ENCODE measurements at regions of chr1 and their contacts with region 1.

Region 1: GRCh38 chr1:167066333-167067122 is 23.6 kb downstream of the GPA33 start:
- DNase-seq: peak; percentile 56 to 68
- ATAC-seq: peak; percentile 85 to 96
- H3K4me3 ChIP-seq: peak overlapping the region; percentile 36 to 70 (median 42)
- H3K27ac ChIP-seq: no peak overlapping the region
- H3K4me1 ChIP-seq: peaks cover 0 to 5% of the 10 kb centered on the region in 2 donors
- H3K27me3 ChIP-seq: no peaks in the 10 kb centered on the region
- CTCF ChIP-seq: peak; percentile 93 to 98 (median 96)
- POLR2A ChIP-seq: no peak

Region 2: GRCh38 chr1:167128261-167129227 is 62.0 kb after region 1 on chr1:
- in situ Hi-C with region 1: loop called in 2 of 4 experiments (anchors 5 to 10 kb)
- intact Hi-C with region 1: loop called (anchors 2 kb)
- DNase-seq: no peak
- ATAC-seq: peak in 1 of 2 donors; percentile 46
- H3K4me3 ChIP-seq: no peak overlapping the region
- H3K27ac ChIP-seq: peak overlapping the region in 3 of 4 donors; percentile 18 to 55 (median 52)
- H3K4me1 ChIP-seq: peaks cover 5 to 20% of the 10 kb centered on the region in 2 donors
- H3K27me3 ChIP-seq: no peaks in the 10 kb centered on the region
- CTCF ChIP-seq: peak in 2 of 5 experiments; percentile 21 to 27
- POLR2A ChIP-seq: no peak

Region 3: DNA sequence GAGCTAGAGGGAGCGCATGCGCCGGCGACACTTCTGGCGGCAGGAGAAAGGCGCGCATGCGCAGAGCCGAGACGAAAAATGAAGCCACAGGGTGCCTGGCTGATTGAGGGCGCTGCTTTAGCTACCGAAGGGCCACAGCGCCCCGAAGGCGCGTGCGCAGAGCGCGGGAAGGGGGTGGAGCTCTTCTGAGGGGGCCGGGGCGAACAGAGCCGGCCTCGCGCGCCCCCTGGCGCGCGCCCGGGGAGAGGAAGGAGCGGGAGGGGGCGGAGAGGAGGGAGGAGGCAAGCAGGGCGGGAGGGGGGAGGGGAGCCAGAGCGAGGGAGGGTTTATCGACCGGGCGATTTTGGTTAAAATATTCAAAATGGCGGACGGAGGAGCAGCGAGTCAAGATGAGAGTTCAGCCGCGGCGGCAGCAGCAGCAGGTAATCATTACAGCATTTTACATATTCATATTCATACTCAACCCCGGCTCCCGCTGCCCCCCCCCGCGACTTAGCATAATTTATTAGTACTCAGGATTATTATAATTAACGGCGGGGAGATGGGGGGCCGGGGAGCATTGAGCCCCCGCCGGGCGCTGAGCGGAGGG is 154.1 kb after region 1 on chr1 and contains the start of gene POU2F1:
- in situ Hi-C with region 1: loop called in 3 of 4 experiments (anchors 10 kb)
- intact Hi-C with region 1: loop called (anchors 1 kb)
- DNase-seq: peak; percentile 97 to 98
- ATAC-seq: peak; percentile 70 to 82
- H3K4me3 ChIP-seq: peak within 1 kb of the TSS; percentile 77 to 89 (median 84)
- H3K27ac ChIP-seq: peak within 1 kb of the TSS; percentile 94 to 99 (median 98)
- H3K4me1 ChIP-seq: peaks cover 36 to 42% of the 10 kb centered on the region in 2 donors
- H3K27me3 ChIP-seq: no peaks in the 10 kb centered on the region
- CTCF ChIP-seq: peak; percentile 19 to 85 (median 70)
- POLR2A ChIP-seq: peak; percentile 67 to 84
- total RNA-seq, gene POU2F1: 3.8 to 7.3 (median 4.8) TPM

Region 4: DNA sequence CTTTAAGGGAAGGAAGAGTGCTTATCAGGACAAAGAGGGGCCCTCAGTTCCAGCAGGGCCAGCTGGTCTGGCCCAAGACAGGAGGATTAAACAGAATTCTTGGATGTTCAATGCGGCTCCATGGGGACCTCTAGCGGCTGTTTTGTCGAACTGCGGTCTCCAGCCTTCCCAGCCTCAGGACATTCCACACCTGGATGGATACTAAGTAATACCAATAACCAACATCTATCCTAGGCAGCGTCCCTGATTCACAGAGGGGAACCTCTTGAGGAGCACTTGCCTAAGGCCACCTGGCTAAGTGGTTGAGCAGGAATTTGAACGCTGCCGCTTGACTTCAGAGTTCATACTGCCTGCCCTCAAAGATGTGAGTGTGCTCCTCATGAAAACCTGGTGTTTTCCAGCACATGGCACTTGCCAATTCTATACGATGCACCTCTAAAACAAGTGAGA is 467.3 kb after region 1 on chr1:
- in situ Hi-C with region 1: loop called (anchors 10 to 25 kb)
- intact Hi-C with region 1: loop called (anchors 5 kb)
- DNase-seq: no peak
- ATAC-seq: peak; percentile 81 to 88
- H3K4me3 ChIP-seq: no peak overlapping the region
- H3K27ac ChIP-seq: no peak overlapping the region
- H3K4me1 ChIP-seq: no peaks in the 10 kb centered on the region
- H3K27me3 ChIP-seq: no peaks in the 10 kb centered on the region
- CTCF ChIP-seq: peak; percentile 62 to 88 (median 77)
- POLR2A ChIP-seq: no peak

Measured in gastrocnemius medialis (tissue), 4 donors.